ENCODE measurements at regions of chr16 and their contacts with region 1.

Region 1: GRCh38 chr16:89386306-89387185 is 103.8 kb downstream of the ANKRD11 start:
- DNase-seq: peak in 1 of 10 donors; percentile 82

Region 2: DNA sequence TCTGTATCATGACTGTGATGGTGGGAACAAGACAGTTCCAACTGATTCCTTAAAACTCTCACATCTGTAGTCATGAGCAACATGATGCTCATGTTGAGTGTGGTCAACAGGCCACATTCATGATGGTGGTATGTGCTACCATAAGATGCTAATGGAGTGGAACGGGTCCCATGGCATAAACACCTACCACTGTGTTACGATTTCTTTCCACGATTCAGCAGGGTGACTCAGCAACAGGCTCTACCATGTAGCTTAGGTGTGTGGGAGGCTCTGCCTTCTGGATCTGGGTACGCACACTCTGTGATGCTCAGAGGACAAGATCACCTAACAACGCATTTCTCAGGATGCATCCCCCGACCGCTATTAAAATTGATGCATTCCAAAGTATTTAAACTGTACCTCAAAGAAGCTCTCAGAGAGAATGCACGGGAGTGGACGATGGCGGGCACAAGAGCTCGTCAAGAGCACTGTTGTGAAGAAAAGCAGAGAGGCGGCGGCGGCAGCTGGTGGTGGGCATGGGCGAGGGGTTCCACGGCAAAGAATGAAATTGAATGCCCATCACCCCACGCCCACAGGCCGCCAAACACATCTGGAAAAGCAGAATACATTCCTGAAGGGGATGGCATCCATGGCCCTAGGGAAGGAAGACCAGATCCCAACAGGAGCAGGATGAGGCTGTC is 35.7 kb before region 1 on chr16:
- intact Hi-C with region 1: loop called (anchors 5 kb)
- DNase-seq: peak in 2 of 10 donors; percentile 63 to 88

Region 3: GRCh38 chr16:89410794-89411309 is 24.3 kb after region 1 on chr16:
- intact Hi-C with region 1: no loop called
- DNase-seq: peak in 4 of 10 donors; percentile 36 to 91 (median 46)

Region 4: DNA sequence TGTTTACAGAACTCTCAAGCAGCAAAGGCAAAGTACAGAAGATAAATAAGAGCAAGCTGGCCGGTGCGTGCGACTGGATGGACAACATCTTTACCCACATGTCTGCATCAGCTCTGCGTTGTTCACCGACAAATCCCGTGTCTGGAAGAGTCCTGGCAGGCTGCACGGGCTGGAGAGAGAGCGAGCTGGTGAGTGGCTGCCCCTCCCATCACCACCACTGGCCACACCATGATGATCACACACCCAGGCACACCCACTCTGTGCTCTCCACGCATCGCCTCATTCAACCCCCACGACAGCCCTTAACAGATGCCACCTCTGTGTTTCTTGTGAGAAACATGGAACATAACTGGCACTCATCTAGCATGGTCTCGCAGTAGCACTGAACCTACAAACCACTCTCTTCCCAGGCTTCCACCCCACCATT is 44.6 kb after region 1 on chr16:
- intact Hi-C with region 1: no loop called
- DNase-seq: peak in 3 of 10 donors; percentile 79 to 89 (median 87)

Region 5: GRCh38 chr16:89873972-89874689 is 487.6 kb after region 1 on chr16:
- intact Hi-C with region 1: no loop called
- DNase-seq: peak; percentile 88 to 99 (median 94)

Measured in posterior cingulate gyrus (tissue), 11 donors.